ENCODE measurements at regions of chrX and their contacts with region 1.

Region 1: GRCh38 chrX:2595258-2595657 is 94.5 kb upstream of the DHRSX start:
- DNase-seq: no peak
- ATAC-seq: peak in 1 of 8 donors; percentile 12
- H3K4me3 ChIP-seq: no peak overlapping the region
- H3K27ac ChIP-seq: no peak overlapping the region
- H3K4me1 ChIP-seq: peaks cover 0 to 11% (median 0%) of the 10 kb centered on the region in 9 donors
- H3K27me3 ChIP-seq: no peaks in the 10 kb centered on the region
- CTCF ChIP-seq: no peak

Region 2: DNA sequence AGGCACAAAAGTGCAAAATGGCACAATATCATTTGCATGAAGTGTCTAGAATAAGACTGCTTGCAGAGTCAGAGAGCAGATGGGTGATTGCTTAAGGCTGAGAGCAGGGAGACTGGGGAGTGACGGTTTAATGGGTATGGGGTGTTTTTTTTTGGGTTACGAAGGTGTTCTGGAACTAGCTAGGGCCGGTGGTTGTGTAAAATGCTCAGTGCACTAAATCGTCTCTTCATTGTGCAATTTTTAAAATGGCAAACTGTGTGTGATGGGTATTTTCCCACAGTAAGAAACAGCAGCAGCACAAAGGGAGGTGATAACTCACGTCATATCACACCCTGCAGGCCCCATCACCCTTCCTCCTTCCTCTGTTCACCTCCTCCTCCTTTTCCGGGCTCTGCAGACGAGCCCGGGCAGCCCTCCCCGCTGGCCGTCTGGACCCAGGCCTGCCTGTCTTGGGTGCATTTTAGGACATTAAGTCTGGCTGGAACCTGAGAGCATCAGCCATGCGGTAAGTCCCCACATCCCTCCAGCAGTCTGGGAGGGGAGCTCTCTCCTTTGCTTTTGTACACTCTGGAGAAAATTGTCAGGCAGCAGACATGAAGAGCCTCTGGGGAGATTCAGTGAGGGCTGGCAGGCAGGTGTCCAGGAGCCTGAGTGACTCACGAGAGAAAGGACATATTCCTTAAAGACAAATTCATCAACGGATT is 937.7 kb before region 1 on chrX:
- intact Hi-C with region 1: loop called in 7 of 10 experiments (anchors 2 to 10 kb)
- DNase-seq: no peak
- ATAC-seq: peak in 6 of 8 donors; percentile 15 to 87 (median 56)
- H3K4me3 ChIP-seq: peak overlapping the region in 2 of 10 donors; percentile 7 to 46
- H3K27ac ChIP-seq: peak overlapping the region in 1 of 10 donors; percentile 74
- H3K4me1 ChIP-seq: peaks cover 0 to 13% (median 10%) of the 10 kb centered on the region in 9 donors
- H3K27me3 ChIP-seq: no peaks in the 10 kb centered on the region
- CTCF ChIP-seq: no peak

Region 3: DNA sequence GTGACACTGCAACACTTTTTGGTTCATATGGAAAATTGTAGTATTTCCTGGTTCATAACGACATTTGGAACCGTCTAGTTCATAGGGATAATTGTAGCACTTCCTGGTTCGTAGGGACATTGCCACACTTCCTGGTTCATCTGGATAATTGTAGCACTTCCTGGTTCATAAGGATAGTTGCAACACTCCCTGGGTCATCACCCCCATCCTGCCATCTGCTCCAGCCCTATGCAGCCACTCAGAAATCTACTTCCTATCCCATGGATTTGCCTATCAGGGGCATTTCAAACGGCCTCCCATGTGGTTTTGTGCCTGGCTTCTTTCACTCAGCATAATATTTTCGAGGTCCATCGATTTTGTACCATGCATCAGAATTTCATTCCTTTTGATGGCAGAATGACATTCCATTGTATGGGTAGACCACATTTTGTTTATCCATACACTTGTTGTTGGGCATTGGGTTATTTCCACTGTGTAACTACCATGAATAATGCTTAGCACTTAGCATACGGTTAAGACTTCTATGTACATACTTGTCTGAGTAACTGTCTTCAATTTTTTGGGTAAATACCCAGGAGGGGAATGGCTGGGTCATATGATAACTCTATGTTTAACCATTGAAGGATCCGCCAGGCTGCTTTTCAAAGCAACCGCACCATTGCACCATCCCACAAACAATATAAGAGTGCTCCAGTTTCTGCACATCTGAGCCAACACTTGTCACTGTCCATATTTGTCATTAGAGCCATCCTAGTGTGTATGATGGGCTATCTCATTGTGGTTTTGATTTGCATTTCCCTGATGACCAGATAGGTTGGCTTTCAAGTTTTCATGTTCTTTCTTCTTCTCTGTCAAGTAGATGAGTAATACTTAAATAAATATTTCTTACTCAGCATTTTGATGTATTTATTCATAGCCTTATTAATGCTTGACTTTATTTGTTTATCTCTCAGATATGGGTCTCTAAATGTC is 37.6 kb after region 1 on chrX:
- intact Hi-C with region 1: no loop called
- DNase-seq: no peak
- ATAC-seq: no peak
- H3K4me3 ChIP-seq: no peak overlapping the region
- H3K27ac ChIP-seq: peak overlapping the region in 1 of 10 donors; percentile 37
- H3K4me1 ChIP-seq: peaks cover 0 to 3% (median 0%) of the 10 kb centered on the region in 9 donors
- H3K27me3 ChIP-seq: no peaks in the 10 kb centered on the region
- CTCF ChIP-seq: no peak

Region 4: DNA sequence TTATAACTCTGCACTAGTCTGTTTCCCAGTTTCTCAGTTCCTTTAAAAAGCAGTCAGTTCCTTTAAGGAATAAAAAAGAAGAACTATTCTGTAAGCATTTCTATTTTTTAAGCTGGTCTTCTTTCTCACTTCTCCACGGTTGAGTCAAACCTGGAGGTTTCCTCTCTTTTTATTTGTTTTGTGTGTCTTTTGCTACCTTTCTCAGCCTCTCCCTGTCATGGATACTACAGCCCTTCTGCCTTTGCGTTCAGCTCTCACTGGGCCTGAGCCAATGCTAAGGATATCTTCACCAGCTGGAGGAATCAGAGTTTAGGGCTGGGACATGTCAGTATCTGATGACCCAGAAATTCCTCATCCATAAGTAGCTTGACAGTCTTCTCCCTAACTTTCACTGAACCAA is 1167.9 kb after region 1 on chrX:
- intact Hi-C with region 1: no loop called
- DNase-seq: no peak
- ATAC-seq: no peak
- H3K4me3 ChIP-seq: no peak overlapping the region
- H3K27ac ChIP-seq: no peak overlapping the region
- H3K4me1 ChIP-seq: no peaks in the 10 kb centered on the region
- H3K27me3 ChIP-seq: no peaks in the 10 kb centered on the region
- CTCF ChIP-seq: no peak

Measured in heart right ventricle (tissue), 16 donors.